HCT116 (cell line): ENCODE measurements at regions of chr12 and their contacts with region 1.

Region 1: GRCh38 chr12:43728117-43728516 is 30.5 kb downstream of the PUS7L start:
- DNase-seq: no peak
- ATAC-seq: no peak
- H3K4me3 ChIP-seq: no peak overlapping the region
- H3K27ac ChIP-seq: no peak overlapping the region
- H3K4me1 ChIP-seq: no peaks in the 10 kb centered on the region
- H3K27me3 ChIP-seq: no peaks in the 10 kb centered on the region
- CTCF ChIP-seq: peak in 2 of 3 experiments; percentile 31 to 50; a peak in 3 of 6 replicates
- POLR2A ChIP-seq: no peak
- RAD21 ChIP-seq: peak; percentile 43

Region 2: GRCh38 chr12:43501703-43502102 is 226.4 kb before region 1 on chr12:
- CTCF ChIA-PET with region 1: interaction called, 7 read pairs
- POLR2A ChIA-PET with region 1: no interaction called
- RAD21 ChIA-PET with region 1: no interaction called
- intact Hi-C with region 1: loop called (anchors 2 kb)
- DNase-seq: peak; percentile 36
- ATAC-seq: no peak
- H3K4me3 ChIP-seq: no peak overlapping the region
- H3K27ac ChIP-seq: no peak overlapping the region
- H3K4me1 ChIP-seq: no peaks in the 10 kb centered on the region
- H3K27me3 ChIP-seq: no peaks in the 10 kb centered on the region
- CTCF ChIP-seq: peak; percentile 61 to 75 (median 65)
- POLR2A ChIP-seq: no peak
- RAD21 ChIP-seq: peak; percentile 72

Region 3: GRCh38 chr12:43742106-43742505 is 14.0 kb after region 1 on chr12:
- CTCF ChIA-PET with region 1: no interaction called
- POLR2A ChIA-PET with region 1: no interaction called
- RAD21 ChIA-PET with region 1: no interaction called
- intact Hi-C with region 1: no loop called
- DNase-seq: no peak
- ATAC-seq: no peak
- H3K4me3 ChIP-seq: no peak overlapping the region
- H3K27ac ChIP-seq: no peak overlapping the region
- H3K4me1 ChIP-seq: no peaks in the 10 kb centered on the region
- H3K27me3 ChIP-seq: no peaks in the 10 kb centered on the region
- CTCF ChIP-seq: no peak
- POLR2A ChIP-seq: no peak
- RAD21 ChIP-seq: no peak